GM12878 (cell line): ENCODE measurements at regions of chr9 and their contacts with region 1.

Region 1: GRCh38 chr9:22244141-22245011 is 202.2 kb upstream of the DMRTA1 start:
- DNase-seq: no peak
- ATAC-seq: peak; percentile 72
- H3K4me3 ChIP-seq: no peak overlapping the region
- H3K27ac ChIP-seq: no peak overlapping the region
- H3K4me1 ChIP-seq: peaks cover 19% of the 10 kb centered on the region
- H3K27me3 ChIP-seq: peaks cover 0 to 7% of the 10 kb centered on the region in 2 experiments; a peak in 2 of 4 replicates
- CTCF ChIP-seq: peak; percentile 53 to 59 (median 59)
- EP300 ChIP-seq: no peak
- POLR2A ChIP-seq: no peak
- RAD21 ChIP-seq: peak; percentile 76

Region 2: GRCh38 chr9:21933865-21934264 is 310.5 kb before region 1 on chr9:
- CTCF ChIA-PET with region 1: no interaction called
- POLR2A ChIA-PET with region 1: no interaction called
- RAD21 ChIA-PET with region 1: no interaction called
- SMC1A ChIA-PET with region 1: no interaction called
- in situ Hi-C with region 1: no loop called
- intact Hi-C with region 1: no loop called
- DNase-seq: no peak
- ATAC-seq: no peak
- H3K4me3 ChIP-seq: no peak overlapping the region
- H3K27ac ChIP-seq: no peak overlapping the region
- H3K4me1 ChIP-seq: no peaks in the 10 kb centered on the region
- H3K27me3 ChIP-seq: no peaks in the 10 kb centered on the region
- CTCF ChIP-seq: no peak
- EP300 ChIP-seq: no peak
- POLR2A ChIP-seq: no peak
- RAD21 ChIP-seq: no peak

Region 3: DNA sequence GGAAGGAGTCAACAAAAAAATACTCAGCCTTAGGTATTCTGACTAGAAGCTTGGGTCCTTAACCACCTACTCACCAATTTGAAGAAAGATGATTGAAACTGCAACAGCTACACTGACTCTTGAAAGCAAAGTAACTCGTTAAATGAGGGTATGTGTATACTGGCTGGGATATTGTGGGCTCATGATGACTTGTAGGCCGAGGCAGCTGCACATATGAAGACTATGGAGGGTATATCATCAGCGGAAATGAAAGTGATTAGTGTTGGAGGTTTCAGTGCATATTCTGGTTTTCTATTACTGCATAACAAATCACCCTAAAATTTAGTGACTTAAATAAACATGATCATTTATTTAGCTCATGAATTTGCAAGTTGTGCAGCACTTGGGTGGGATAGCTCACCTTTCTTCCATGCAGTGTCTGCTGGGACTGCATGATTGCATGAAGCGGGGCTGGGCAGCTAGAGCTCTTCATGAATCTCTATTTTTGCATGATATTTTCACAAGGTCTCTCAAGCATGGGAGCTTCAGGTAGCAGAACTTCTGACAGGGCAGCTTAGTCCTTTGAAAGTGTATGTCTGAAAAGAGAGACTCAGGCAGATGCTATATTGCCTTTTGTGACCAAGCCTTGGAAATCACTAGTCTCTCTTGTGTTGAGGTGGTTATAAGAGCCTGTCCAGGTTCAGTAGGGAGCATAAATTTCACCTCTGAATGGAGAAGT is 139.2 kb before region 1 on chr9:
- CTCF ChIA-PET with region 1: interaction called, 4 read pairs
- POLR2A ChIA-PET with region 1: no interaction called
- RAD21 ChIA-PET with region 1: no interaction called
- SMC1A ChIA-PET with region 1: no interaction called
- in situ Hi-C with region 1: no loop called
- intact Hi-C with region 1: loop called (anchors 10 kb)
- DNase-seq: peak; percentile 40
- ATAC-seq: peak; percentile 93
- H3K4me3 ChIP-seq: no peak overlapping the region
- H3K27ac ChIP-seq: no peak overlapping the region
- H3K4me1 ChIP-seq: peaks cover 9% of the 10 kb centered on the region
- H3K27me3 ChIP-seq: peaks cover 0 to 8% of the 10 kb centered on the region in 2 experiments; a peak in 2 of 4 replicates
- CTCF ChIP-seq: no peak
- EP300 ChIP-seq: no peak
- POLR2A ChIP-seq: no peak
- RAD21 ChIP-seq: no peak

Region 4: DNA sequence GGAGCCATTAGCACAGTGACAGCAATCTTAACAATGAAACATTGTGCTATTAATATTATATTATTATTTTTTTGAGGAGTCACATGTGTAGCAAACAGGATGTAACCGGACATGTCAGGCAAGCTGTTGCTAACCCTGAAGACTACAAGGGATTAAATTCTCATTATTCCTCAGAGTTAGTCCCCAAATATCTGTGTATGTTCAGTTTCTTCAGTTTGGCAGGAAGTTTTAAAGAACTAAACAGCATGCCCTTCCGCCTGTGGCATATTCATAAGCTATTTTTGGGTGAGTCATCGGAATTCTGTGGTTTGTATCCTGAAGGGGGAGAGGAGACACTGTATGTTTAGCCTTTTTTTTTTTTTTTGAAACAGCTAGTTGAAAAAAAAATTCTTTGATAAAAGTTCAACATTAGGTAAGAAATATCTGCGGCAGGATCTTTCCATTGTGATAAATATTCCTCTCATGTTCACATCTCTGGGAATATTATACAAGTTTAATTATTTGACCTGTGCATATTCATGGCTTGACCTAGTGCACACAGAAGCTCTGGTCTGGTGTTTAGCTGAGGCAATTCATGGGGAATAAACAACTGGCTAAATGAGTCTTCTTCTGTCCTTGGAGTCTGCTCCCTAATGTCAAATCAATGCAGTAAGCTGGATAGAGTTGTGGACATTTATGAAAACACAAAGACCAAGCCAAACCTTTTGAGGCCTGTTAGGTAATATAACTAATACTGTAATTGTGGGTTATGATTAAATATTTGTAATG is 32.6 kb before region 1 on chr9:
- CTCF ChIA-PET with region 1: no interaction called
- POLR2A ChIA-PET with region 1: no interaction called
- RAD21 ChIA-PET with region 1: no interaction called
- SMC1A ChIA-PET with region 1: no interaction called
- in situ Hi-C with region 1: no loop called
- intact Hi-C with region 1: no loop called
- DNase-seq: no peak
- ATAC-seq: no peak
- H3K4me3 ChIP-seq: no peak overlapping the region
- H3K27ac ChIP-seq: no peak overlapping the region
- H3K4me1 ChIP-seq: no peaks in the 10 kb centered on the region
- H3K27me3 ChIP-seq: no peaks in the 10 kb centered on the region
- CTCF ChIP-seq: no peak
- EP300 ChIP-seq: no peak
- POLR2A ChIP-seq: no peak
- RAD21 ChIP-seq: no peak

Region 5: GRCh38 chr9:22232971-22233370 is 11.4 kb before region 1 on chr9:
- CTCF ChIA-PET with region 1: interaction called, 10 read pairs
- POLR2A ChIA-PET with region 1: no interaction called
- RAD21 ChIA-PET with region 1: interaction called, 3 read pairs
- SMC1A ChIA-PET with region 1: interaction called, 3 read pairs
- in situ Hi-C with region 1: no loop called
- intact Hi-C with region 1: no loop called
- DNase-seq: no peak
- ATAC-seq: no peak
- H3K4me3 ChIP-seq: no peak overlapping the region
- H3K27ac ChIP-seq: no peak overlapping the region
- H3K4me1 ChIP-seq: no peaks in the 10 kb centered on the region
- H3K27me3 ChIP-seq: no peaks in the 10 kb centered on the region; a peak in 1 of 4 replicates
- CTCF ChIP-seq: no peak
- EP300 ChIP-seq: no peak
- POLR2A ChIP-seq: no peak
- RAD21 ChIP-seq: no peak

Region 6: DNA sequence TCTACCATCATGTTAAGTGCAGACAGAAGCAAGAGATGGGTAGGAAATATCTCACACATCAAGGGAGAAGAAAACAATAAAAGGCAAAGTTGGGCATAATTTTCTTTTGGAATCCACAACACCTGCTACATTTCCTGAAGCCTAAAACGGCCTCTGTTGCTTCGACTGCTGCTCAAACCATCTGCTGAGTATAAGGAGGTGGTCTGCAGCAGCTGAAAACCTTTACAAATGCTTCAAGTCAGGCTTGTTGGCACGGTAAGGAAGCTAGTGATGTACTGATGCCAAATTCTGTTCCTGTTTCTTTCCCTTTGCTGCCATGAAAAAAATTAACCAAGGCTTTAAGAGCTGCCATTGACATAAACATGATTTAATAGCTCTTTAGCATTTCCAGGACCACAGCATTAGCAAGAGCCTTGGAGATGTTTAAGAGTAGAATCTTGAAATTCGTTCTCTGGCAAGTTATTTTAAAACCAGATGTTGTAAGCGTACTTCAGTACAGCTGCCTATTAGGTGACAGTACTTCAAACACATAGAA is 277.9 kb after region 1 on chr9:
- CTCF ChIA-PET with region 1: no interaction called
- POLR2A ChIA-PET with region 1: no interaction called
- RAD21 ChIA-PET with region 1: no interaction called
- SMC1A ChIA-PET with region 1: no interaction called
- in situ Hi-C with region 1: no loop called
- intact Hi-C with region 1: no loop called
- DNase-seq: no peak
- ATAC-seq: no peak
- H3K4me3 ChIP-seq: no peak overlapping the region
- H3K27ac ChIP-seq: no peak overlapping the region
- H3K4me1 ChIP-seq: no peaks in the 10 kb centered on the region
- H3K27me3 ChIP-seq: no peaks in the 10 kb centered on the region
- CTCF ChIP-seq: no peak
- EP300 ChIP-seq: no peak
- POLR2A ChIP-seq: no peak
- RAD21 ChIP-seq: no peak